ENCODE measurements at regions of chr15 and their contacts with region 1.

Region 1: DNA sequence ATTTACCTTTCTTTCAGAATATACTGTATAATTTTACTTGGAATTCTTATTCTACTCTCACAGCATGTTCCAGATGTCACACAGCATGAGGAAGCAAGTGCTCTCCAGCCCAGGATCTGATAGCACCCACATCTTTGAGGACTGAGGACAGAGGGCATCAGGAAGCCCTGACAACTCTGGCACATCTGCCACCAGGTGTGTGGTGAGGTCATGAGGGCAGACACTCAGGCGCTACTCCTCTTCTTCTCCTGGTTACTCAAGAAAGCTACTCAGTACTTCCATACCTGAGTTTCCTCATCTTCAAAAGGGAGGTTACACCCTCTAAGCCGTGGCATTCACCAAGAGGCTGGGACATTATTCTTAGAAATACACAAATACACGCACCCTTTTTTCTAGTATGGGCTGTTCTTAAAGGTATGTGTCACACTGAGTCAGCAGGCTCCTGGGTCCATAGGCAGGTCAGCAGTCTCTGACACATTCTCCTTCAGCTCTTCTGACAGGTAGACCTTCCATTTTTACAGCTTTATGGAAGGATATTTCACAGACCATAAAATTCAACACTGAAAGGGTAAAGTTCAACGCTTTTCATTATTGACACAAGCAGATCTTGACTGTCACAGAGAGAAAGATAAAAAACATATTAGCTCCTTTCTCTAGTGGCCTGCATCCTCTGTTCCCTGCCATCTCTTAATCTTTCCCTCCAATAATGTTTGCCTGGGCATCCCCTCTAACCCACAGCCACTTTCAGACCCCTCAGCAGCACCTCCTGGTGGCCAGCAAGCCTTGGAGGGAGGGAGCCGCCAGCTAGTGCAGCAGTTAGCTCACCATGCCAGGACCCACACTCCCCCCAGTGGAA is 103.2 kb upstream of the TJP1 start:
- DNase-seq: peak; percentile 74
- H3K4me3 ChIP-seq: no peak overlapping the region
- H3K27ac ChIP-seq: no peak overlapping the region
- H3K4me1 ChIP-seq: peaks cover 0 to 6% (median 5%) of the 10 kb centered on the region in 4 donors
- H3K27me3 ChIP-seq: no peaks in the 10 kb centered on the region
- CTCF ChIP-seq: peak; percentile 52 to 72 (median 64)
- EP300 ChIP-seq: no peak
- POLR2A ChIP-seq: no peak

Region 2: GRCh38 chr15:29668120-29668602 is 257.3 kb before region 1 on chr15:
- intact Hi-C with region 1: loop called (anchors 10 kb)
- DNase-seq: peak; percentile 76
- H3K4me3 ChIP-seq: no peak overlapping the region
- H3K27ac ChIP-seq: no peak overlapping the region
- H3K4me1 ChIP-seq: peaks cover 0 to 10% (median 0%) of the 10 kb centered on the region in 4 donors
- H3K27me3 ChIP-seq: no peaks in the 10 kb centered on the region
- CTCF ChIP-seq: peak; percentile 40 to 70 (median 58)
- EP300 ChIP-seq: no peak
- POLR2A ChIP-seq: no peak

Region 3: DNA sequence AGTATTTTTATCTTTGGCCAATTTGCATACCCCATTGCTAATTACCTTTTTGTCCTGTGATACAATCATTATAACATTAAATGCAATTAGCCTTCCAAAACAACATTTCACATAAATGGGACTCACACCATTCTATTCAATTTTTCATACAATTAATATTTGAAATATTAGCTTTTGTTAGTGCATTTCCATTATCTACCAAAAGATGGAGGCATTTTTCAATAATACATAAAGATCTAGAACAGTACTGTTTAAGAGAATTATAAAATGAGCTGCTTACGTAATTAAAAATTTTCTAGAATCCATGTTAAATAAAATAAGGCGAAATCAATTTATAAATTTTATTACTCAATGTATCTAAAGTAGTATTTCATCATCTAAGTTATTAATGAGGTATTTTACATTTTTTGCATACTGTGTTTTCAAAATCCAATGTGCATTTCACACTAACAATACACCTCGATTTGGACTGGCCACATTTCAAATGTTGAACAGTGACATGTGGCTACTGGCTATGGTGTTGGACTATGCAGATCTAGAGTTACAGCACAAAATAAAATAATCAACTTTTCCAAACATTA is 177.5 kb before region 1 on chr15:
- intact Hi-C with region 1: loop called (anchors 5 kb)
- DNase-seq: no peak
- H3K4me3 ChIP-seq: no peak overlapping the region
- H3K27ac ChIP-seq: no peak overlapping the region
- H3K4me1 ChIP-seq: peaks cover 0 to 24% (median 3%) of the 10 kb centered on the region in 4 donors
- H3K27me3 ChIP-seq: no peaks in the 10 kb centered on the region
- CTCF ChIP-seq: peak in 3 of 4 experiments; percentile 14 to 42 (median 31)
- EP300 ChIP-seq: no peak
- POLR2A ChIP-seq: no peak

Region 4: GRCh38 chr15:29821416-29822131 is 103.9 kb before region 1 on chr15:
- intact Hi-C with region 1: loop called (anchors 5 kb)
- DNase-seq: peak; percentile 88
- H3K4me3 ChIP-seq: peak overlapping the region; percentile 77 to 93 (median 86)
- H3K27ac ChIP-seq: peak overlapping the region; percentile 97 to 99 (median 98)
- H3K4me1 ChIP-seq: peaks cover 0 to 26% (median 25%) of the 10 kb centered on the region in 4 donors
- H3K27me3 ChIP-seq: no peaks in the 10 kb centered on the region
- CTCF ChIP-seq: peak in 1 of 4 experiments; percentile 12
- EP300 ChIP-seq: no peak
- POLR2A ChIP-seq: peak; percentile 36 to 40

Region 5: DNA sequence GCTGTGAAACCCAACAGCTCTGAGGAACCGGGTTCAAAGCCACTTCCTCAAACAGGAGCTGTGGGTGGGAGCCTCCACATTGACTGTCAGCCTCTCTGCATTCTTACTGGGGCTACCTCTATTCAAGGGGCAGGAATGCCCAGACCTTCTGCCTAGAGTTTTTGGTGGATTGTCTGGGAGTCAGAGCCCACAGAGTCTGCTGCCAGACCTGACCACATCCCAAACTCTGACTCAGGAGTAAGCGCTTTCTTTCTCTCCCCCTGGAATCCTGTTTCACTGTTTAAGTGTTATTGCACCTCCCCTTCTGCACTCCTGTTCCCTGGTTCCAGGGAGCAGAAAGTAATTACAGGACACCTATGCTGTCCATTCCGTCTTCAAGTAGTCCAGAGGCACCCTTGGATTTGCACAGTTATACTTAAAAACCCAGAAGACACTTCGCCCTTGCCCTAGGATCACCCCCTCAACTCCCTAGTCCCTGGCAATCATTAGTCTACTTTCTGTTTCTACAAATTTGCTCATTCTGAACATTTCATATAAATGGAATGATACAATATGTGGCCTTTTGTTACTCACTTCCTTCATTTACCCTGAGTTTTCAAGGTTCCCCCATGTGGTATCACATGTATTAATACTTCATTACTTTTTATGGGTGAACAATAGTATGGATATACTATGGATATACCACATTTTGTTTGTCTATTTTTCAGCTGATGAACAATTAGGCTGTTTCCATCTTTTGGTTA is 65.3 kb before region 1 on chr15:
- intact Hi-C with region 1: no loop called
- DNase-seq: no peak
- H3K4me3 ChIP-seq: no peak overlapping the region
- H3K27ac ChIP-seq: no peak overlapping the region
- H3K4me1 ChIP-seq: peaks cover 0 to 2% (median 0%) of the 10 kb centered on the region in 4 donors
- H3K27me3 ChIP-seq: no peaks in the 10 kb centered on the region
- CTCF ChIP-seq: no peak
- EP300 ChIP-seq: no peak
- POLR2A ChIP-seq: no peak